CD4-positive, alpha-beta memory T cell (primary cell): ENCODE measurements at regions of chr1 and their contacts with region 1.

Region 1: DNA sequence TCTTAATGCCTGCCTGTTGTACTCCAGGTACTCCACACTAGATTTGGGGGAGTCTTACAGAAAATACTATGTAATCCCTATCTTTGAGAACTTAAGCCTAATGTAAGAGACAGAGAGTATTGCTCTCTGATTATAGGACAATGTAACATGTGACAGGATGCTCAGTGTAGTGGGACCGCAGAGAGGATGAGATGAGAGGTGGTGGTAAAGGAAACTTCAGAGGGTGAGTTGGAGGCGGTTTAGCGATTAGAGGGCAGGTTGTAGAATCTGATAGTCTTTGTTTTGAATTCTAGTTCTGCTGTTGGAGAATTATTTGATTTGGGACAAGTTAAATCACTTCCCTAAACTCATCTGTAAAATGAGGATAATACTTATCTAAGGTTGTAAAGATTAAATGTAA is 5.4 kb downstream of the SOAT1 start:
- DNase-seq: peak; percentile 67 to 78 (median 73)
- H3K4me3 ChIP-seq: no peak overlapping the region
- H3K4me3 Mint-ChIP-seq: peak overlapping the region; percentile 2 to 65 (median 59)
- H3K27ac ChIP-seq: no peak overlapping the region
- H3K27ac Mint-ChIP-seq: peak overlapping the region; percentile 2 to 86 (median 48)
- H3K4me1 ChIP-seq: peaks cover 72% of the 10 kb centered on the region
- H3K4me1 Mint-ChIP-seq: peaks cover 49 to 78% (median 52%) of the 10 kb centered on the region in 4 donors
- H3K27me3 ChIP-seq: no peaks in the 10 kb centered on the region
- H3K27me3 Mint-ChIP-seq: no peaks in the 10 kb centered on the region

Region 2: DNA sequence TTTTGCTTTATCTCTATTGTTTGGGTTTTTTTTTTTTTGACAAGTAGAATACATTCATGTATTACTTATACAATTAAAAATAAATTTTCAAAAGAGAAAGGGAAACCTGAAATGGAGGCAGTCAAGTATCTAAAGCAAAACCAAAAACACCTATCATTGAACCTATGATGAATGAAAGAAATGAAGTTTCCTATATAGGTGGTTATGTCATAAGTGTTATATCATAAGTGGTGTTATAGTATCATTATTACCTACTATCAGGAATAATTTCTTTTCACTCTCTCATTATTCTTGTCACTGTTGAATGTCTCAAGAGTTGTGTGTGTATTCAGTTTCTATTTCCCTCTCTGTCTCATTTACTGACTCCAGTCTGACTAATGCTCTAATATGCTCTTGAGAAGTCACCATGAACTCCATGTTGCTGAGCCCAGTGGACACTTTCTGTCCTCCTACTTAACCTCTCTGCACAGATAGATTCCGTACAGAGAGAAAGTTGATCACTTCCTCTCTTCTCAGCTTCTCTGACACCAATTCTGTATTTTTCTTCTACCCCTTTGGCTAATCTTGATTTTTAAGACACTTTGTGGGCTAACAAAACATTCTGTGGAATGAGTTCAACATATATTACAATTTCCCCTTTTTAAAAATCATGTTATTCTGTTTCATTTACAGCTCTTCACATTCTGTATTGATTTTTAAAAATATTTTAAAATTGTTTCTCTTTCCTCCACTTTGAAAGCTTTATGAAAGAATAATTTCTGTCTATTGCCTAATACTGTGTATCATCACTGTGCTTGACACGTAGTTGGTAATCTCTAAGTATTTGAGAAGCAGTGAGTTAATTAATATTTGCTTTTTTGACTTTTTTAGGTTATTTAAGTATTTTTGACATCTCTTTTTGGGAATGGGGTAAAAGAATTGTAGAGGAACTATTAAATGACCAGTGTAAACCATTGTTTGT is 1154.9 kb before region 1 on chr1:
- CTCF ChIA-PET with region 1: no interaction called
- POLR2A ChIA-PET with region 1: no interaction called
- intact Hi-C with region 1: no loop called
- DNase-seq: no peak
- H3K4me3 ChIP-seq: no peak overlapping the region
- H3K4me3 Mint-ChIP-seq: no peak overlapping the region
- H3K27ac ChIP-seq: no peak overlapping the region
- H3K27ac Mint-ChIP-seq: no peak overlapping the region
- H3K4me1 ChIP-seq: no peaks in the 10 kb centered on the region
- H3K4me1 Mint-ChIP-seq: no peaks in the 10 kb centered on the region
- H3K27me3 ChIP-seq: no peaks in the 10 kb centered on the region
- H3K27me3 Mint-ChIP-seq: no peaks in the 10 kb centered on the region

Region 3: GRCh38 chr1:179313004-179313403 is 14.1 kb after region 1 on chr1:
- CTCF ChIA-PET with region 1: interaction called, 3 read pairs
- POLR2A ChIA-PET with region 1: interaction called, 4 read pairs
- intact Hi-C with region 1: loop called (anchors 2 kb)
- DNase-seq: no peak
- H3K4me3 ChIP-seq: no peak overlapping the region
- H3K4me3 Mint-ChIP-seq: no peak overlapping the region
- H3K27ac ChIP-seq: no peak overlapping the region
- H3K27ac Mint-ChIP-seq: peak overlapping the region in 1 of 7 donors; percentile 4
- H3K4me1 ChIP-seq: peaks cover 14% of the 10 kb centered on the region
- H3K4me1 Mint-ChIP-seq: peaks cover 25 to 38% (median 34%) of the 10 kb centered on the region in 4 donors
- H3K27me3 ChIP-seq: no peaks in the 10 kb centered on the region
- H3K27me3 Mint-ChIP-seq: no peaks in the 10 kb centered on the region

Region 4: GRCh38 chr1:179353546-179353945 is 54.6 kb after region 1 on chr1:
- CTCF ChIA-PET with region 1: no interaction called
- POLR2A ChIA-PET with region 1: interaction called, 6 read pairs
- intact Hi-C with region 1: loop called (anchors 5 kb)
- DNase-seq: no peak
- H3K4me3 ChIP-seq: no peak overlapping the region
- H3K4me3 Mint-ChIP-seq: no peak overlapping the region
- H3K27ac ChIP-seq: no peak overlapping the region
- H3K27ac Mint-ChIP-seq: peak overlapping the region in 4 of 7 donors; percentile 6 to 56 (median 32)
- H3K4me1 ChIP-seq: no peaks in the 10 kb centered on the region
- H3K4me1 Mint-ChIP-seq: peaks cover 0 to 4% (median 0%) of the 10 kb centered on the region in 4 donors
- H3K27me3 ChIP-seq: no peaks in the 10 kb centered on the region
- H3K27me3 Mint-ChIP-seq: no peaks in the 10 kb centered on the region

Region 5: DNA sequence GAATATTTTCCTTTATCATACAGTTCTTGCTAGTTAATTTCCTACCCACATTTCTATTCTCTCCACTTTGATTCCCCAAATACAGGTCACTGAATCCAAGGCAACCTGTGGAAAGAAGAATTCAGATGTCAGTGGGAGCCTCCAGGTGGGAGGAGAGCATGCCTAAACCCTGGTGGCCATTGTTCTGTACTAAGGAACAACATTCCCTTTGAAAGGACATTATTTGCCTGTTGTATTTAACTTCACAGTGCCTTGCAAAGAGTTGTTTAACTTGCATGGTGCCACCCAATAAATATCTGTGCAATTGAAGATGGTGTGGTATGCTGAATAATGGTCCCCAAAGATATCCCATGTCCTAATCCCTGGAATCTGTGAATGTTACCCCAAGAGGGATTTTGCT is 255.5 kb after region 1 on chr1:
- CTCF ChIA-PET with region 1: no interaction called
- POLR2A ChIA-PET with region 1: no interaction called
- intact Hi-C with region 1: no loop called
- DNase-seq: no peak
- H3K4me3 ChIP-seq: no peak overlapping the region
- H3K4me3 Mint-ChIP-seq: no peak overlapping the region
- H3K27ac ChIP-seq: no peak overlapping the region
- H3K27ac Mint-ChIP-seq: no peak overlapping the region
- H3K4me1 ChIP-seq: no peaks in the 10 kb centered on the region
- H3K4me1 Mint-ChIP-seq: no peaks in the 10 kb centered on the region
- H3K27me3 ChIP-seq: no peaks in the 10 kb centered on the region
- H3K27me3 Mint-ChIP-seq: peaks cover 3 to 4% of the 10 kb centered on the region in 2 donors